ENCODE measurements at regions of chr18 and their contacts with region 1.

Region 1: DNA sequence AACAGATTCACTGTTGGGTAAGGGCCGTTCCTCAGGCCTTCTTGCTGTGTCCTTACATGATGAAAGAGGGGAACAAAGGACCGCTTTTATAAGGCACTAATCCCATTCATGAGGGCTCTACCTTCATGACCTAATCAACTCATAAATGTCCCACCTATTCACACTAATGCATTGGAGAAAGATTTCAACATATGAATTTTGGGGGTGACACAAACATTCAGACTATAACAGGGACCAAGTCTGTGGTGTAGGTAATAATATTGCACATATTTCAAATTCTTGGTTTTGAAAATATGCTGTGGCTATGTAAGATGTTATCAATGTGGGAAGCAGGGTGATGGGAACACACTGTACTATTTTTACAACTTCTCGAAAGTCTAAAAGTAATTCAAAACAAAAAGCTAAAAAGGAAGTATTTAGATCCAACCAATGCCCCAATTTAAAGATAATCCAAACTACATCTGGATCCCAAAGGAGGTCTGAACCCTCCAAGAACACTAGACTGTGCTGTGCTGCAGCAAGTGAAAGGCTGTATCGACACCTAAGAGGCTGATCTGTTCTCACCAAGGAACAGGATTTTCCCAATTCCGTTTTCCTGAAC is 82.4 kb upstream of the TGIF1 start:
- DNase-seq: no peak
- ATAC-seq: no peak
- H3K4me3 ChIP-seq: no peak overlapping the region
- H3K4me3 Mint-ChIP-seq: no peak overlapping the region
- H3K27ac ChIP-seq: no peak overlapping the region
- H3K27ac Mint-ChIP-seq: no peak overlapping the region
- H3K4me1 ChIP-seq: no peaks in the 10 kb centered on the region
- H3K4me1 Mint-ChIP-seq: no peaks in the 10 kb centered on the region
- H3K27me3 ChIP-seq: no peaks in the 10 kb centered on the region
- H3K27me3 Mint-ChIP-seq: peaks cover 5% of the 10 kb centered on the region
- CTCF ChIP-seq: no peak

Region 2: GRCh38 chr18:3305354-3305762 is 62.2 kb before region 1 on chr18:
- CTCF ChIA-PET with region 1: no interaction called
- POLR2A ChIA-PET with region 1: no interaction called
- intact Hi-C with region 1: no loop called
- DNase-seq: peak in 5 of 9 experiments; percentile 9 to 75 (median 48)
- ATAC-seq: peak; percentile 93
- H3K4me3 ChIP-seq: no peak overlapping the region
- H3K4me3 Mint-ChIP-seq: no peak overlapping the region
- H3K27ac ChIP-seq: no peak overlapping the region
- H3K27ac Mint-ChIP-seq: peak overlapping the region; percentile 58
- H3K4me1 ChIP-seq: no peaks in the 10 kb centered on the region
- H3K4me1 Mint-ChIP-seq: no peaks in the 10 kb centered on the region
- H3K27me3 ChIP-seq: peaks cover 0 to under 1% of the 10 kb centered on the region in 2 experiments
- H3K27me3 Mint-ChIP-seq: peaks cover 14% of the 10 kb centered on the region
- CTCF ChIP-seq: no peak

Region 3: GRCh38 chr18:3345885-3346284 is 21.7 kb before region 1 on chr18:
- CTCF ChIA-PET with region 1: no interaction called
- POLR2A ChIA-PET with region 1: no interaction called
- intact Hi-C with region 1: loop called in 1 of 2 experiments (anchors 2 kb)
- DNase-seq: no peak
- ATAC-seq: no peak
- H3K4me3 ChIP-seq: no peak overlapping the region
- H3K4me3 Mint-ChIP-seq: no peak overlapping the region
- H3K27ac ChIP-seq: no peak overlapping the region
- H3K27ac Mint-ChIP-seq: no peak overlapping the region
- H3K4me1 ChIP-seq: no peaks in the 10 kb centered on the region
- H3K4me1 Mint-ChIP-seq: no peaks in the 10 kb centered on the region
- H3K27me3 ChIP-seq: no peaks in the 10 kb centered on the region
- H3K27me3 Mint-ChIP-seq: peaks cover 2% of the 10 kb centered on the region
- CTCF ChIP-seq: no peak

Measured in CD8-positive, alpha-beta T cell (primary cell).